Posterior cingulate gyrus (tissue), 11 donors: ENCODE measurements at regions of chr17 and their contacts with region 1.

Region 1: DNA sequence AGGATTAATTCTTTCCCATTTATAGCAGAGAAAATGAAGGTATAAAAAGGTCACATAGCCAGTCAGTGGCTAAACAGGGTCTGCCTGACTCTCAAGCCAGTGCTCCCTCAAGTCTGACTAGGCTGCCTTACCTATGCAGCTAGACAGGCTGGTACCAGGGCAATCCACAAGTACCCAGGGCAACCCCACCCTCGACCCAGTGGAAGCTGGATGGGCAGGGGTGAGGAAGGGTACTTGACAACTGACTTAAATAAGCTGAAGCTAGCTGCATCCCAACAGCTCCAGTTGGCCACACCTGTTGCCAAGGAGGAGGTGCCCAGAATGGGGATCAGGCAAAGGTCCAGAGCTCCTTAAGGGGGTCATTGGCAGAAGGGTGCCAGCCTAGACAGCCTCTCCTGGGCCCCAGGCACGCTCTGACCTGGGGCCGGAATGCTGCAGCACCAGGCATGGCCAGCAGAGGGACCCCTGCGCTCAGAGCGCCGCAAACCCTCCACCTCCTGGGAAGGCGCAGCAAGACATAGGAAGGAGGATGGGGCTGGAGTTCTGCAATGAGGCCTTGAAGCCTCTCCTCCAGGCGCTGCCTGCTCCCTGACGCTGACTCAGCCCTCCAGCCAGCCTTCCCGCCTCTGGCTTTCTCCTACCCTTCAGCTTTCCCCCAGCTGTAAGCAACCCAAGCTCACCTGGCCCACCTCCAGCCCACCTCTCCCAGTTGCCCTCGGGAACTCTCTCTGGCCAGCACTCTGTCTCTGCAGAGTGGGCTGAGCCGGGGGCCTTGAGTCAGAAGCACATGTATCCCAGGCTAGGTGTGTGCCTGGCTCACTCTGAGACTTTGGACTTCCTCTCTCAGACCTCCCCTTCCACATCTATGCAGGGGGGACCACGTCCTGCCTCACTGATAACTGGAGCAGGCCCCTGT is 28.8 kb downstream of the MPP2 start:
- DNase-seq: peak; percentile 57 to 97 (median 80)

Region 2: GRCh38 chr17:43940630-43941029 is 62.1 kb after region 1 on chr17:
- intact Hi-C with region 1: loop called (anchors 10 kb)
- DNase-seq: peak in 2 of 10 donors; percentile 54 to 55

Region 3: DNA sequence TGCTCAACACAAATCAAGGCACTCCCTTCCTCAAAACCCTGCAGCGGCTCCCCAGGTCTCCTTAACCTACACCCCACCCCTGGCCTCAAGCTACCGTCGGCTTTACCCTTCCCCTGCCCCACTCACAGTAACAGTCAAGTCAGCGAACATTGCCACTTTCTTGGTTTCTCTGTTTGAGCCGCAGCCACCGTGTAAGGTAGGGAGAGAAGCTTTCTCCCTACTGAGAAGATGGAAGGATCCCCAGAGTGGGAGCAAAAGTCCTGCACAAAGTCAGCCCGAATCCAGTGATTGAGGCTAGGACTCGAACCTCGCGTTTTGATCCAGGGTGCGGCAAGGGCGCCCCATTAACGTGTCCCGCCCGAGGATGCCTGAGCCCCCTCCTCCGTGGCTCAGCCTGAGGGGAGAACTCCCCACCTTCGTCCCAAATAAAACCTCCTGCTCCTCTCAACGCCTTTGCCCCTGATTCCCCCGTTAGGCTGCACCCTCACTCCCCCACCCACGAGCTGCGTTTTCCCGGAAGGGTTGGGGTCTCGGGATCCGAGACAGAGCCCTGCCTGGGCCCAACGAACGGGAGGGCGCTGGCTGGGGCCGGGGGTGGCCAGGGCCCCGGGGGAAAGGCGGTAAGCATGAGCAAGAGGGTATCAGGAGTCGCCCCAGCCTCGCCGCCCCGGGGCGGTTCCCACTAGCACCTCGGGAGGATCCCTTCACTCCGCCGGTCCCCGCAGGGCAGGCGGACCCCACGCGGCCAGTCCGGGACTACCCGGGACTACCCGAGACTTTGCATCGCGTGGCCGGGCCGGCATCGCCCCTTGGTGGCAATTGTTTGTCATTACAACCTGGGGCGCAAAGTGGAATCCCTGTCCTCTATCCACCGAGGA is 116.0 kb after region 1 on chr17:
- intact Hi-C with region 1: loop called (anchors 10 kb)
- DNase-seq: peak; percentile 64 to 97 (median 79)

Region 4: DNA sequence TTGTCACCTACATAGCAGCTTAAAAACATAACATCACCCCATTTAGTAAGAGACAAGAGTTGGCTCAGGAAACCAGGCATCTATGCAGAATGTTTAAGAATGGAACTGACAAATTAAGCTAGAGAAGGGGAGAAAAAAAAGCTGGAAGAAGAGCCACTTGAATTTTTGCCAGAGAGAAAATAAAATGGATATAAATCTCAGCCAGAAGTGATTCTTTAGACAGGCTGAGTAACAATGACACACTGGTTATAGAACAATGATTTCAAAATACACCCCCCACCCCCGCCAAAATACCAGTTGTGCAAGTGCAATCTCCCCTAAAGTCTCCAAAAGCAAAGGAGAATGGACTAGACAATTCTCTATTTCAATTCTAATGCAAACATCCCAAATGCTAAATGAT is 165.5 kb after region 1 on chr17:
- intact Hi-C with region 1: loop called (anchors 1 kb)
- DNase-seq: no peak